ENCODE measurements at regions of chr2 and their contacts with region 1.

Region 1: GRCh38 chr2:161273038-161273760 is 35.0 kb upstream of the PSMD14 start:
- DNase-seq: peak; percentile 42 to 79 (median 45)
- ATAC-seq: peak; percentile 84
- H3K4me3 ChIP-seq: no peak overlapping the region
- H3K27ac ChIP-seq: no peak overlapping the region
- H3K4me1 ChIP-seq: no peaks in the 10 kb centered on the region
- H3K27me3 ChIP-seq: no peaks in the 10 kb centered on the region
- CTCF ChIP-seq: peak; percentile 59 to 74 (median 64); a peak in 5 of 6 replicates
- EP300 ChIP-seq: no peak
- POLR2A ChIP-seq: no peak
- RAD21 ChIP-seq: peak; percentile 53 to 92

Region 2: GRCh38 chr2:160109936-160110673 is 1163.1 kb before region 1 on chr2:
- CTCF ChIA-PET with region 1: no interaction called
- POLR2A ChIA-PET with region 1: no interaction called
- in situ Hi-C with region 1: no loop called
- intact Hi-C with region 1: loop called (anchors 10 kb)
- DNase-seq: peak; percentile 50 to 64 (median 61)
- ATAC-seq: peak; percentile 95
- H3K4me3 ChIP-seq: no peak overlapping the region
- H3K27ac ChIP-seq: no peak overlapping the region
- H3K4me1 ChIP-seq: no peaks in the 10 kb centered on the region
- H3K27me3 ChIP-seq: no peaks in the 10 kb centered on the region
- CTCF ChIP-seq: peak; percentile 64 to 85 (median 77)
- EP300 ChIP-seq: no peak
- POLR2A ChIP-seq: no peak
- RAD21 ChIP-seq: peak; percentile 73 to 75

Region 3: GRCh38 chr2:161063157-161063954 is 209.8 kb before region 1 on chr2:
- CTCF ChIA-PET with region 1: no interaction called
- POLR2A ChIA-PET with region 1: no interaction called
- in situ Hi-C with region 1: no loop called
- intact Hi-C with region 1: loop called (anchors 5 kb)
- DNase-seq: peak; percentile 46 to 70 (median 62)
- ATAC-seq: peak; percentile 97
- H3K4me3 ChIP-seq: no peak overlapping the region
- H3K27ac ChIP-seq: no peak overlapping the region
- H3K4me1 ChIP-seq: no peaks in the 10 kb centered on the region
- H3K27me3 ChIP-seq: peaks cover 0 to 6% of the 10 kb centered on the region in 2 experiments; a peak in 1 of 5 replicates
- CTCF ChIP-seq: peak; percentile 75 to 83 (median 83)
- EP300 ChIP-seq: no peak
- POLR2A ChIP-seq: no peak
- RAD21 ChIP-seq: peak; percentile 50 to 75

Region 4: GRCh38 chr2:161250864-161251436 is 22.2 kb before region 1 on chr2:
- CTCF ChIA-PET with region 1: interaction called, 3 read pairs
- POLR2A ChIA-PET with region 1: no interaction called
- in situ Hi-C with region 1: no loop called
- intact Hi-C with region 1: loop called (anchors 2 kb)
- DNase-seq: peak; percentile 39 to 80 (median 60)
- ATAC-seq: peak; percentile 90
- H3K4me3 ChIP-seq: no peak overlapping the region
- H3K27ac ChIP-seq: no peak overlapping the region
- H3K4me1 ChIP-seq: peaks cover 0 to 2% of the 10 kb centered on the region in 2 experiments; a peak in 1 of 5 replicates
- H3K27me3 ChIP-seq: no peaks in the 10 kb centered on the region; a peak in 1 of 5 replicates
- CTCF ChIP-seq: peak; percentile 61 to 75 (median 70)
- EP300 ChIP-seq: no peak
- POLR2A ChIP-seq: no peak
- RAD21 ChIP-seq: peak; percentile 58 to 82

Region 5: DNA sequence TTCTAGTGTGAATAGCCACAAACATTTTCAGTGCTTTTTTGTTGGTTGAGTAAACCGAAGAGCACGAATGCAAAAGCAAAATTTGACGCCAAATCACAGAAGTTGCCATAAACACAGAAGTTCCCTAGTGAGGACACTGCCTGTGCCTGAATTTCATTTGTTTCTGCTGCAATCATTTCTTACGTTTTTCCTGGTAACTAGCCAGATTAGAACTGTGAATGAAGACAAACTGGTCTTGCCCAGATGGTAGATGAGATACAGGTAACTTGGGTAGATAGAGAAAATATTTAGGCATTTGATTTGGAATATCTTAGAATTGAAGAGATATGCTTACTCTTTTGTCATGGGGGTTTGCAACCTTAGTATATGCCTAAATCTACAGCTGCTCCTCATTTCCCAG is 133.1 kb after region 1 on chr2:
- CTCF ChIA-PET with region 1: no interaction called
- POLR2A ChIA-PET with region 1: no interaction called
- in situ Hi-C with region 1: no loop called
- intact Hi-C with region 1: no loop called
- DNase-seq: no peak
- ATAC-seq: no peak
- H3K4me3 ChIP-seq: no peak overlapping the region
- H3K27ac ChIP-seq: no peak overlapping the region
- H3K4me1 ChIP-seq: no peaks in the 10 kb centered on the region
- H3K27me3 ChIP-seq: no peaks in the 10 kb centered on the region
- CTCF ChIP-seq: no peak
- EP300 ChIP-seq: no peak
- POLR2A ChIP-seq: no peak
- RAD21 ChIP-seq: no peak

Region 6: GRCh38 chr2:162123806-162124758 is 850.9 kb after region 1 on chr2:
- CTCF ChIA-PET with region 1: interaction called, 3 read pairs
- POLR2A ChIA-PET with region 1: no interaction called
- in situ Hi-C with region 1: loop called (anchors 25 kb)
- intact Hi-C with region 1: no loop called
- DNase-seq: peak; percentile 44 to 67 (median 54)
- ATAC-seq: peak; percentile 83
- H3K4me3 ChIP-seq: no peak overlapping the region
- H3K27ac ChIP-seq: no peak overlapping the region
- H3K4me1 ChIP-seq: no peaks in the 10 kb centered on the region
- H3K27me3 ChIP-seq: no peaks in the 10 kb centered on the region
- CTCF ChIP-seq: peak; percentile 29 to 77 (median 42); a peak in 5 of 6 replicates
- EP300 ChIP-seq: no peak
- POLR2A ChIP-seq: no peak
- RAD21 ChIP-seq: peak; percentile 62 to 80

Measured in K562 (cell line).